Calu3 (cell line): ENCODE measurements at regions of chr4 and their contacts with region 1.

Region 1: DNA sequence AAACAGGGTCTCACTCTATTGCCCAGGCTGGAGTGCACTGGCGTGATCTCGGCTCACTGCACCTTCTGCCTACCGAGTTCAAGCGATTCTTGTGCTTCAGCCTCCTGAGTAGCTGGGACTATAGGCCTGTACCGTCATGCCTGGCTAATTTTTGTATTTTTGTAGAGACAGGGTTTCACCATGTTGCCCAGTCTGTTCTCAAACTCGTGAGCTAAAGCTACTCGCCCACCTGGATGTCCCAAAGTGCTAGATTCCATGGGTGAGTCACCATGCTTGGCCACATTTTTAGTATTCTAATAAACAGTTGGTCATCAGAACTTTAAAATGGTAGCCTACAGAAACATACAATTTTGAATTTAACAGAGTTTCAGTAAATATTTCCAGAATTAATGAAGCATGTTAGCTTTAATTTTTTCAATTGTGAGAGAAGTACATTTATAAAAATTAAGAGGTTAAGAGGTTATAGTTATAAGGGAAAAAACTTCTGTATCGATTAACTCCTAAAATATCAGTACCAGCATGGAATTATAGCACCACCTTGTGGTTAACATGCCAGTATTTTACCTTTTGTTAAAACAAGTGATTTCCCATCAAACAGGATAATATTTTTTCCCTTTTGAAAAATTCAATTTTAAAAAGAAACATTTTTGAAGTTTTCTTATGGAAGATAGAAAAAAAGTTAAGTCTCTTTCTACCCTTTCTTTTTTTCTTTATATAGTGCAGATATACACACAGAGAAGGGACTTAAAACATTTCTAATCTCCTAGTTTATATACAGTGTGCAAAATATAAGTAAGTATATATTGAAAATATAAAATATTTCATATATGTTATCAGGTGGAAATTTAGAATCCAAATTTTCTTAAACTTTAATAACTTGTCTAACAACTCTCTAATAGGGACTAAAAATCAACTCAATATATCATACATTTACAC is 35.4 kb downstream of the CEP44 start:
- DNase-seq: no peak
- H3K4me3 Mint-ChIP-seq: no peak overlapping the region
- H3K27ac Mint-ChIP-seq: no peak overlapping the region
- H3K4me1 Mint-ChIP-seq: no peaks in the 10 kb centered on the region
- H3K27me3 Mint-ChIP-seq: no peaks in the 10 kb centered on the region
- CTCF ChIP-seq: peak; percentile 23

Region 2: DNA sequence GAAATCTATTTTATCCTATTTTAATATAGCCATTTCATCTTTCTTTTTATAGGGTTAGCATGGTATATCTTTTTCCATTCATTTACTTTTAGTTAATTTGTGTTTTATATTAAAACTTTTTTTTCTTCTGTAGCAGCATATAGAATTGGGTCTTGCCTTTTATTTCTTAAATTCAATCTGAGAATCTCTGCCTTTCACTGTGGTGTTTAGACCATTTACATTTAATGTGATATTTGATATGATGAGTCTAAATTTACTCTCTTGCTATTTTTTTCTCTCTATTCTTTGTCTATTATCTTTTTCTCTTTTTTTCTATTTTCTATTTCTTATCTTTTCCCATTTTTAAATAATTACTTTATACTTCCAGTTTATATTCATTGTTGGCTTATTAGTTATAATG is 683.7 kb before region 1 on chr4:
- CTCF ChIA-PET with region 1: no interaction called
- intact Hi-C with region 1: no loop called
- DNase-seq: no peak
- H3K4me3 Mint-ChIP-seq: no peak overlapping the region
- H3K27ac Mint-ChIP-seq: no peak overlapping the region
- H3K4me1 Mint-ChIP-seq: no peaks in the 10 kb centered on the region
- H3K27me3 Mint-ChIP-seq: no peaks in the 10 kb centered on the region
- CTCF ChIP-seq: no peak

Region 3: DNA sequence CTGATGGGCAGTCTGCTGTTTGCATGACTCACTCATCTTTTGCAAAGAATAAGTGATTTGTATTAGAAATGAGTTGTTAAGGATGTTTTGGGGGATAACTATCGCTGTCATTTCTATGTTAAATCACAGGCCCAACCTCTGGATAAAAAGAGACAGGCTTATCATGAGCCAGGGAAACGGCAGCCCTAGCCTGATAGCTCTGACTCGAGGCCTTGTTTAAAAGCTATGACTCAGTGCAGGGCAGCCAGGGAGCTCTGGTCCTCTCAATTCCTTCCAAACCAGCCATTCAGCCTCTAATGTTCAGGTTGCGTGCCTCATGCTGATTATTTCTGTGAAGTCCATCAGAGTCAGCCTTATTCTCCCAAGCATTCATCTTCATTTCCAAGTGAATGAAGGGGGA is 483.2 kb before region 1 on chr4:
- CTCF ChIA-PET with region 1: no interaction called
- intact Hi-C with region 1: loop called (anchors 10 kb)
- DNase-seq: peak; percentile 1
- H3K4me3 Mint-ChIP-seq: no peak overlapping the region
- H3K27ac Mint-ChIP-seq: no peak overlapping the region
- H3K4me1 Mint-ChIP-seq: no peaks in the 10 kb centered on the region
- H3K27me3 Mint-ChIP-seq: no peaks in the 10 kb centered on the region
- CTCF ChIP-seq: no peak

Region 4: GRCh38 chr4:173990126-173990868 is 328.8 kb before region 1 on chr4:
- CTCF ChIA-PET with region 1: no interaction called
- intact Hi-C with region 1: loop called (anchors 5 kb)
- DNase-seq: peak; percentile 4
- H3K4me3 Mint-ChIP-seq: no peak overlapping the region
- H3K27ac Mint-ChIP-seq: no peak overlapping the region
- H3K4me1 Mint-ChIP-seq: no peaks in the 10 kb centered on the region
- H3K27me3 Mint-ChIP-seq: no peaks in the 10 kb centered on the region
- CTCF ChIP-seq: no peak

Region 5: DNA sequence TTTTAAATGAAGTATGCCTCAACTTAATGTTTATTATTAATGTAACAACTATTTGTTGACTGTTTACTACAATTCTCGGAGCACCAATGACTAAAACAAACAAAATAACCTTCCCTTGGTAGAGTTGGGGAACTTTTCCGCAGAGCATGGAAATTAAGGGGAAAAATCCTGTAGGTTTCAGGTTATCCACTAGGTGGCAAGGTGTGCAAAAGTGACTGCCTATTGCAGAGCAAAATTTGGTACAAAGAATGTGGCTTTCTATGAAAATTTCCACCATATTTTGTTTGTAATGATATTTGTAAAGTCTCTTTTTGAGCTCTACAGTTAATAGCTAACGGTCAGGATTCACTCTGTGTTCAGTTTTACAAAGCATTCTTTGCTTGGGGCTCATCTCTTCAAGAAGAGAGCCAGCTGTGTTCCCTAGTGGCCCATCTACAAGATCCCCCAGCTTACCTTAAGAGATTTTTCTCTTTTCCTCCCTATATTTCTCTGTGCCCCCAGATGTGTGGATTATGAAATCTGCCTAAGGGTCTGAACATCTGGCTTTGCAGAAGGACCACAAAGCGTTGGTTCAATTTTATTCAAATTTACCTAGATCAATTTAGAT is 96.7 kb before region 1 on chr4:
- CTCF ChIA-PET with region 1: interaction called, 5 read pairs
- intact Hi-C with region 1: loop called (anchors 1 kb)
- DNase-seq: peak; percentile 12
- H3K4me3 Mint-ChIP-seq: no peak overlapping the region
- H3K27ac Mint-ChIP-seq: no peak overlapping the region
- H3K4me1 Mint-ChIP-seq: no peaks in the 10 kb centered on the region
- H3K27me3 Mint-ChIP-seq: no peaks in the 10 kb centered on the region
- CTCF ChIP-seq: peak; percentile 44

Region 6: GRCh38 chr4:174919886-174920423 is 600.9 kb after region 1 on chr4:
- CTCF ChIA-PET with region 1: no interaction called
- intact Hi-C with region 1: no loop called
- DNase-seq: no peak
- H3K4me3 Mint-ChIP-seq: no peak overlapping the region
- H3K27ac Mint-ChIP-seq: no peak overlapping the region
- H3K4me1 Mint-ChIP-seq: no peaks in the 10 kb centered on the region
- H3K27me3 Mint-ChIP-seq: no peaks in the 10 kb centered on the region
- CTCF ChIP-seq: no peak